Heart left ventricle (tissue), 16 donors: ENCODE measurements at regions of chr2 and their contacts with region 1.

Region 1: GRCh38 chr2:33033606-33034081 is 86.9 kb downstream of the LTBP1 start:
- DNase-seq: no peak
- ATAC-seq: peak; percentile 53 to 83 (median 72)
- H3K4me3 ChIP-seq: peak overlapping the region in 8 of 12 donors; percentile 9 to 46 (median 35)
- H3K27ac ChIP-seq: peak overlapping the region in 2 of 12 donors; percentile 7 to 69
- H3K4me1 ChIP-seq: peaks cover 0 to 25% (median 5%) of the 10 kb centered on the region in 12 donors
- H3K27me3 ChIP-seq: no peaks in the 10 kb centered on the region
- CTCF ChIP-seq: peak; percentile 30 to 79 (median 68)
- POLR2A ChIP-seq: no peak

Region 2: DNA sequence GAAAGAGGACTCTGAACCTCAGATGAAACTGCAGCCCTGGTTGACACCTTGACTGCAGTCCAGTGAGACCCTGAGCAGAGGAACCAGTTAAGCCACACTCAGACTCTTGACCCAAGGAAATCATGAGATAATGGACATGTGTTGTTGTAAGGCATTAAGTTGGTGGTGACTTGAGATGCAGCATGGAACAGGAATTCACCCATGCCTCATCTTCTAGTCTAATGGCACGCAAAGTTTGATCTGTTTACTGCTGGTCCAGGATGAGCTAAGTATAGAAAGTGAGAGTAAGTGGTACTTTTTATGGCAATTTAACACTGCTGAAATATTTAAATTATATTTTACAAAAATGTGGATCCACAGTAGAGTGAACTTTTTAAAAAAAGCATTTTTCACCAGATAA is 138.2 kb before region 1 on chr2:
- intact Hi-C with region 1: no loop called
- DNase-seq: no peak
- ATAC-seq: no peak
- H3K4me3 ChIP-seq: no peak overlapping the region
- H3K27ac ChIP-seq: no peak overlapping the region
- H3K4me1 ChIP-seq: no peaks in the 10 kb centered on the region
- H3K27me3 ChIP-seq: no peaks in the 10 kb centered on the region
- CTCF ChIP-seq: no peak
- POLR2A ChIP-seq: no peak

Region 3: DNA sequence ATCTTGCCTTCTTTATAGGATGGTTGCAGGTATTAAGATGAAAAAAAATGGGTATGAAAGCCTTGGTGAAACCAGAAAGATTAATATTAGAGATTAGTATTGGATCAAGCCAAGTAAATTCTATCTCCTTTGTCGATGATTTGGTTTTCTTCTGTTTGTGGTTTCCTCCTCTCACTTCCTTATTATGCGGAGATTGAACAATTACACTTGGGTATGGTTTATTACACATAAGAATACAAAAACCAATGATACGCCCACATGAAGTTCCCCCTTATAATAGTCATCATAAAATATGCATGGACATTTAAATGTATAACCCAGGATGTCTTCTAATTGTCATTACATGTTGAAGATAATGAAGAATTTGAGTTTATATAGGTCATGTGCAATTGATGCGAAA is 82.0 kb before region 1 on chr2:
- intact Hi-C with region 1: loop called in 7 of 10 experiments (anchors 2 to 5 kb)
- DNase-seq: no peak
- ATAC-seq: no peak
- H3K4me3 ChIP-seq: no peak overlapping the region
- H3K27ac ChIP-seq: peak overlapping the region in 1 of 12 donors; percentile 9
- H3K4me1 ChIP-seq: peaks cover 0 to 51% (median 12%) of the 10 kb centered on the region in 12 donors
- H3K27me3 ChIP-seq: peaks cover 0 to 26% (median 0%) of the 10 kb centered on the region in 9 donors
- CTCF ChIP-seq: no peak
- POLR2A ChIP-seq: no peak

Region 4: DNA sequence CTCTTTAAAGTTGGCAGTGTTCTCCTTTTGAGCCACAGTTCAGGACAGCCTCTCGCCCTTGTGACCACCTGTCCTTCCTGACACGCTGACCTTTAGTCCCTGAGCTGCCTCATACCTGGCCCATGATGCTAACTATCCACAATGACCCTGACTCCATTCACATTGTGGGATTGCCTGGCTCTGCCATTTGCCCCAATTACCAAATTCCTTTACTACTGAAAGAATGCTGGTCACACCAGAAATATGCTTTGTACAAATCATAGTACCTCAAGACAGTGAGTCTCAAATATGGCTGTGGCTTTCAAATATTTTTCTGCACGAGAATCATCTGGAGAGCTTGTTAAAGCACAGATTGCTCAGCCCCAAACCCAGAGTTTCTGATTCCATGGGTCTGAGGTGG is 32.7 kb before region 1 on chr2:
- intact Hi-C with region 1: no loop called
- DNase-seq: no peak
- ATAC-seq: no peak
- H3K4me3 ChIP-seq: no peak overlapping the region
- H3K27ac ChIP-seq: no peak overlapping the region
- H3K4me1 ChIP-seq: peaks cover 0 to 12% (median 0%) of the 10 kb centered on the region in 12 donors
- H3K27me3 ChIP-seq: no peaks in the 10 kb centered on the region
- CTCF ChIP-seq: no peak
- POLR2A ChIP-seq: no peak

Region 5: GRCh38 chr2:33275689-33276444 is 242.2 kb after region 1 on chr2:
- intact Hi-C with region 1: loop called in 4 of 10 experiments (anchors 5 to 10 kb)
- DNase-seq: peak in 4 of 5 donors; percentile 29 to 66 (median 44)
- ATAC-seq: peak; percentile 40 to 80 (median 71)
- H3K4me3 ChIP-seq: no peak overlapping the region
- H3K27ac ChIP-seq: peak overlapping the region in 7 of 12 donors; percentile 9 to 89 (median 55)
- H3K4me1 ChIP-seq: peaks cover 0 to 21% (median 0%) of the 10 kb centered on the region in 12 donors
- H3K27me3 ChIP-seq: no peaks in the 10 kb centered on the region
- CTCF ChIP-seq: no peak
- POLR2A ChIP-seq: no peak

Region 6: GRCh38 chr2:33441235-33441810 is 407.7 kb after region 1 on chr2:
- intact Hi-C with region 1: loop called in 3 of 10 experiments (anchors 10 kb)
- DNase-seq: peak in 4 of 5 donors; percentile 56 to 64 (median 61)
- ATAC-seq: peak; percentile 66 to 85 (median 82)
- H3K4me3 ChIP-seq: no peak overlapping the region
- H3K27ac ChIP-seq: peak overlapping the region in 7 of 12 donors; percentile 10 to 74 (median 52)
- H3K4me1 ChIP-seq: peaks cover 0 to 45% (median 18%) of the 10 kb centered on the region in 12 donors
- H3K27me3 ChIP-seq: no peaks in the 10 kb centered on the region
- CTCF ChIP-seq: peak; percentile 51 to 83 (median 71)
- POLR2A ChIP-seq: no peak